ENCODE measurements at regions of chr4 and their contacts with region 1.

Region 1: DNA sequence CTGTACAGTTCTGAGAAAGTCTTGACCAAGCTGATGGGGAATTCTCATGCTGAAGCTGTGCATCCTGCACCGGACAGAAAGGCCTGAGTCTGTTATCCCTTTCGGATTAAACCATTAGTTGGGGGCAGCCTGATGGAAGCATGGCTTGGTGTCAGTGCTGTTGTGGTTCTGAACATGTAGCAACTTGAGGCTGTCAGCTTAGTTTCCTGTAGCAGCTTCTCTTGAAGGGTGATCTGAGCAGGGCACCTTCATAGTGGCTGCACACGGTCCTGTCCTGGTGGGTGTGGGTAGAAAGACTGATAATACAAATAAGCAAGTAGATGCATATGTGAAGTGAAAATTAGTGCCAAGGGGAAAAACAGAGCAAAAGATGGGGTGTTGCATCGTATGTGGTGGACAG is 11.7 kb downstream of the KIAA0232 start:
- DNase-seq: no peak

Region 2: DNA sequence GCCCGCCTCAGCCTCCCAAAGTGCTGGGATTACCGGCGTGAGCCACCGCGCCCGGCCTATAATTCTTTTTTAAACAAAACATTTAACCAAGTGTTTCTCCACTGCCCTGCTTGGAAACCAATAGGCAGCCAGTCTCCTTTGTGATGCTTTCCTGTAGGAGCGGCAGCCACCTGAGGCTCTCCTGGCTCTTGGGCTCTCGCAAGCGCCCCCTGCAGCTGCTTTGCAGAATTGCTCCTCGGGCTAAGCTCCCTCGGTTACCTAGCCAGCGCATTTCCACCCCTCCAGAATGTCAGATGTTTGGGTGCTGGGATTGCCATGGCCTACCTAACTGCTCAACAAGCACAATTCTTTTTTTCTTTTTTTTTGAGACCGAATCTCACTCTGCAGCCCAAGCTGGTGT is 92.8 kb before region 1 on chr4:
- CTCF ChIA-PET with region 1: no interaction called
- POLR2A ChIA-PET with region 1: no interaction called
- DNase-seq: peak; percentile 71

Region 3: DNA sequence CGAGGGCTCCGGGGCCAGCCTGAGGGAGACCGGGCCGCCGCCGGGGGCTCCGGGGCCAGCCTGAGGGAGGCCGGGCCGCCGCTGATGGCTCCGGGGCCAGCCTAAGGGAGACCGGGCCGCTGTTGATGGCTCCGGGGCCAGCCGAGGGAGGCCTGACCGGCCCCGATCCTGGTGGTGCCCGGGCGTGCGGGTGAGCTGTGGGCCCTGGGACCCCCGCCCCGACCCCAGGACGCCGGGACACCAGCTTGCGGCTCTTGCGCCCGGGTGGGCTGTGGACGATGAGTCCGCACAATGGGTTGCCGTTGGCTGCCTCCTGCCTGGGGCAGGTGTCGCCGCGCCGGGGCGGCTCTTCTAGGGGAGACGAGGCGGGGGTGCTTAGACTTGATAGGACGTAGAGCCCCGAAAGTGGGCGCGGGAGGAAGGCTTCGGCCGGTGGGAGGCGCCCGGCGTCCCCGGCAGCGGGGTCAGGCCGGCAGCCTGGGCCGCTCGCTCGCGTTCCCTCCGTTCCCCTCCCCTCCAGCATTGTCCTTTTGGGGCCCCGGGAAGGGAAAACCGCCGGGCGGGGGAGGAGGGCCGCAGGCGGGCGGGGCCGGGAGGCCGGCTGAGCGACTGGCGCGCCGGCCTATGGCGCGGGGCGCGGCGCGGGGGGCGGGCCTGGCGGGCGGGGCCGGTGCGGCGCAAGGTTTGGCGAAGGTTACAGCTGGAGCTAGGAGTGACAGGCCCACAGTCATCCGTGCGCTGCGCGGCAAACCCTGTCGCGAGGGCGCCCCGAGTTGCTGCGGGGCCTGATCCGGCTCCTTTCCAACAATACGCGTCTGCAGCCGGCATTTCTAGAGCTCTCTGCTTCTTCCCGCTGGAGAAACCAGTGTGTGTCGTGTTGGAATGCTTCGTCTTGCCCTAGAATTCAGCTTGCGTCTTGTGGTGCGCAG is 10.9 kb before region 1 on chr4:
- CTCF ChIA-PET with region 1: interaction called, 3 read pairs
- POLR2A ChIA-PET with region 1: interaction called, 20 read pairs
- DNase-seq: peak; percentile 96

Measured in HEK293T (cell line).